Activated naive CD4-positive, alpha-beta T cell treated with anti-CD3 and anti-CD28 coated beads for 36 hours (primary cell): ENCODE measurements at regions of chr7 and their contacts with region 1.

Region 1: DNA sequence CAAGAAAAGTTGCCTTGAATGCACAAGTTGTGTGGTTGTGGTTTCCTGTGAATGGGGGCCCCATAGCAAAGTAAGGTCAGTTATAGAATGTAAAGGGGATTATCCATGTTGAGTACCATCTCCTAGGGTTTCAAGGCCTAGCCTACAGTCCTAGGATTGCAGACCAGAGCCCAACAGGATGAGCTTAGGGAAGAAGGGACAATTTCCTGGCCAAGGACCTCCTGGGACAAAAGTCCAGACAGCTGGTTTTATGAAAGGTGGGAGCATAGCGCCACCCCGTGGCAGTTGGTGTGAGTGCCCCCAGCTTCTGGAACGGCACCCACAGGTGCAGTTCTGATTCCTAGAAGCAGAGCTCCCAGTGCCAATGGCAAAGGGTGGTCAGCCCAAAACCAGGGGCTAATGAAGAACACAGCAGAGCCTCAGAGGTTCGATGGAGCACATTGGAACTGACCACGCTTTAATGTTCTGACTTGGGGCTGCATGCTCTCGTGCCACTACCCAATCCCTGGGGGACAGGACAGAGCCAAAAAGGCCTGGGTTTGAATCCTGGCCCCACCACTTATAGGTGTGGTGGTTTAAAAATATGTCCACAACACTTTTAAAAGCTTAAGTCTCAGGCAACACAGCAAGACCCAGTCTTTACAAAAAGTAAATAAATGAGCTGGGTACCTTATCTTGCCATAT is 25.8 kb upstream of the TMEM120A start:
- DNase-seq: peak; percentile 83
- H3K4me3 Mint-ChIP-seq: no peak overlapping the region
- H3K27ac Mint-ChIP-seq: no peak overlapping the region
- H3K4me1 Mint-ChIP-seq: peaks cover 3% of the 10 kb centered on the region
- H3K27me3 Mint-ChIP-seq: no peaks in the 10 kb centered on the region

Region 2: DNA sequence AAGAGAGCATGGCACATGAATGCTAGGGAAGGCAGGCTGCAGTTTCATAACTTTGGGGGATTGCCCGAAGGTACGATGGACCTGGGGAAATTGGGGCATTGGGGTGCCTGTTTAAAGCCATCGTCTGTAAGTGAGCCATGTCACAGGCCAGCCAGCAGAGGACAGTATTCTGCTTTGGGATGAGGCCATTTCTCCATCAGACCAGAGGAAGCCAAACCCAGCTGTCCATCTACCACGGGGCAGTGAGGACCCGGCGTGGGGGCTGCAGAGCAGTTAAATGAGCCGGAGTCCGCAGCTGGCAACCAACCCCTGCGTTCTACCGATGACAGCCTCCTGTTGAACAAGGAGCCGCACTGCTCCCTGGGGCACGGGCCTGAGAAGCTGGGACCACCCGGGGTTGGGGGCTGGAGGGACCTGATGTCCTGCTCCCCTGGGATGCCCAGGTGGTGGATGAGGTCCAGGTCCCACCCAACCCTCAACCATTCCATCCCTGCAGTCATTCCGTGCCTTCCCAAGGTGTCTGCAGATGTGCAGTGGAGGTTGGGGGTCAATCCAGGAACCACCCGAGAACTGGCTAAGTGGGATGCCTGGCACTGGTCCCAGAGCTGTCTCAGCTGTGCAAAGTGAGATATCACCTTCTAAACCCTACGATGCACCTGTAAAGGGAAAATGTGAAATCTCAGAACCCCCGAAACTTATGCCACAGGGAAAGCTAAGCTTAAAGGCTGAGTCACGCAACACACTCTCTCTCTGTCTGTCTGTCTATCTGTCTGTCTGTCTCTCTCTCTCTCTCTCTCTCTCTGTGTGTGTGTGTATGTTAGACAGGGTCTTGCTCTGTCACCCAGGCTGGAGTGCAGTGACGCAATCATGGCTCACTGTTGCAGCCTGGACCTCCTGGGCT is 153.4 kb before region 1 on chr7:
- CTCF ChIA-PET with region 1: interaction called, 65 read pairs
- intact Hi-C with region 1: loop called (anchors 1 kb)
- DNase-seq: peak; percentile 67
- H3K4me3 Mint-ChIP-seq: no peak overlapping the region
- H3K27ac Mint-ChIP-seq: no peak overlapping the region
- H3K4me1 Mint-ChIP-seq: peaks cover 9% of the 10 kb centered on the region
- H3K27me3 Mint-ChIP-seq: no peaks in the 10 kb centered on the region